Right ventricle myocardium inferior (tissue), 1 donor: ENCODE measurements at regions of chrX and their contacts with region 1.

Region 1: GRCh38 chrX:71378732-71379131 is 12.6 kb downstream of the TAF1 start:
- DNase-seq: no peak
- ATAC-seq: no peak

Region 2: GRCh38 chrX:71454222-71454621 is 75.5 kb after region 1 on chrX:
- intact Hi-C with region 1: loop called (anchors 10 kb)
- DNase-seq: no peak
- ATAC-seq: no peak